Activated CD4-positive, alpha-beta T cell treated with anti-CD3 and anti-CD28 coated beads for 36 hours (primary cell): ENCODE measurements at regions of chr20 and their contacts with region 1.

Region 1: GRCh38 chr20:17542993-17543412 is 11.8 kb upstream of the BFSP1 start:
- DNase-seq: no peak
- ATAC-seq: no peak
- H3K4me3 Mint-ChIP-seq: no peak overlapping the region
- H3K27ac Mint-ChIP-seq: no peak overlapping the region
- H3K4me1 Mint-ChIP-seq: peaks cover 5% of the 10 kb centered on the region
- H3K27me3 Mint-ChIP-seq: peaks cover 17% of the 10 kb centered on the region

Region 2: DNA sequence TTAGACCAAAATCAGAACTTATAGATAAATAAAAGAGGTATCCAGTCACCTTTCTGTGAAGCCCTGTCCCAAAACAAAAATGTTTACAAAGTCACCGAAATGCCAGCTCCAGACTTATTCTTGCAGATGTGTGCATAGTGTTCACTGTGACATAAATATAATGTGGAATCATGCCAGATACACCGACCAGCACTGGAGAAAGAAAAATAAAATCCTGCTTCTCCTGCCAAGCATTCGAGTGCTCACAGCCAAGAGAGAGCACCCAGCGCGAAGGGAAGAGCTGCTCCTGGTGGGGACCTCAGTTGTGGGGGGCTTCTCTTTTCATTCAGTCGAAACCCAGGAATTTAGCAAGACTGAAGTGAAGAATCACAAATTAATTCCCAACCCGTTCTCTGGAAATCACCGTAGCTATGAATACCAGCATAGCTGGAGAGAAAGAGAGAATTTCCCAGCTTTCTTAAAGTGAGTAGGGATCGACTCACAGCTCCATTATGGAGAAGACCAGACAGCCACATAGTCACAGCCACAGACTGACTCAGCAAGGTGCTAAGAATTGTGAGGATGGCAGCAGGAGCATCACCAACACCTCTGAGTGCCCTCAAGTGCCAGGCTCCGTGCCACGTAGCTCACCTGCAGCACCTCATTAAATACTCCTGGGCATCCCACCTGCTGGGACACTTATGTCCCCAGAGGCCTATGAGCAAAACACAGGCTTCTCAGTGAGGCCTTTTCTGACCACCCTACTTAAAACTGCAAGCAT is 45.0 kb before region 1 on chr20:
- CTCF ChIA-PET with region 1: no interaction called
- POLR2A ChIA-PET with region 1: no interaction called
- intact Hi-C with region 1: no loop called
- DNase-seq: no peak
- ATAC-seq: no peak
- H3K4me3 Mint-ChIP-seq: no peak overlapping the region
- H3K27ac Mint-ChIP-seq: no peak overlapping the region
- H3K4me1 Mint-ChIP-seq: no peaks in the 10 kb centered on the region
- H3K27me3 Mint-ChIP-seq: no peaks in the 10 kb centered on the region

Region 3: GRCh38 chr20:17589161-17589834 is 46.3 kb after region 1 on chr20:
- CTCF ChIA-PET with region 1: no interaction called
- POLR2A ChIA-PET with region 1: no interaction called
- intact Hi-C with region 1: no loop called
- DNase-seq: no peak
- ATAC-seq: no peak
- H3K4me3 Mint-ChIP-seq: no peak overlapping the region
- H3K27ac Mint-ChIP-seq: no peak overlapping the region
- H3K4me1 Mint-ChIP-seq: peaks cover 28% of the 10 kb centered on the region
- H3K27me3 Mint-ChIP-seq: no peaks in the 10 kb centered on the region

Region 4: GRCh38 chr20:17617551-17618223 is 74.7 kb after region 1 on chr20:
- CTCF ChIA-PET with region 1: interaction called, 17 read pairs
- POLR2A ChIA-PET with region 1: no interaction called
- intact Hi-C with region 1: no loop called
- DNase-seq: peak; percentile 72
- ATAC-seq: peak; percentile 71
- H3K4me3 Mint-ChIP-seq: no peak overlapping the region
- H3K27ac Mint-ChIP-seq: no peak overlapping the region
- H3K4me1 Mint-ChIP-seq: peaks cover 2% of the 10 kb centered on the region
- H3K27me3 Mint-ChIP-seq: no peaks in the 10 kb centered on the region